ENCODE measurements at regions of chrX and their contacts with region 1.

Region 1: DNA sequence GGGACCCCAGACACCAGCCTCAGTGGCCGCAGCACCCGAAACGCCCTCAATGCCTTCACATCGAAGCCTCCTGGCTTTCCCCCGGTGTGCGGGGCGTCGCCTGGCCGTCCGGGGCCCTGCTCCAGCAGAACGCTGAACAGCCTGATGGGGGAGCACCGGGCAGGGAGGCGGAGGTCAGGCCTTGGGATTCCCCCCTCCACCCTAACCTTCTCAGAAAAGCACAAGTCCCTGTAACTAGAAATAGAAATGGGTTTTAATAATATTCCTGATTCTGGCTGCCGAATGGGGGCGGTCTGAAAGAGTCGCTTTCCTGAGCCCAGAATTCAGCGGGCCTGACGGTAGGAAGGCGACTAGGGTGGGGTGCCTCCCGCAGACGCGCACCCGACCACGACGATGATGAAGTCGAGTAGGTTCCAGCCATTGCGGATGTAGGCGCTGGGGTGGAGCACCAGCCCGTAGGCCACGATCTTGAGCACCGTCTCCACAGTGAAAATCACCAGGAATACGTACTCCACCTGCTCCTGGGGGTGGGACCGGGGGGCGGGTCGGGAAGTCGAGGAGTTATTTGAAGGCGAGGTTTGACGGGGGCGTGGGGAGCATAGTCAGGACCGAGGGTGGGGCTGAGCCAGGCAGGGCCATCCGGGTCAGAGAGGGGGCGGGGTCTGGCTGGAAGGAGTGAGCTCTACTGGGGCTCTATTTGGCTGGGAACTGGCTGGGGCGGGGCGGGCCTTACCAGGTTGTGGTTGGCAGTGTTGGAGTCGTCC is 2.5 kb downstream of the CACNA1F start:
- DNase-seq: peak; percentile 19 to 63 (median 44)
- ATAC-seq: peak; percentile 78
- H3K4me3 ChIP-seq: peak overlapping the region; percentile 28
- H3K4me3 Mint-ChIP-seq: peak overlapping the region; percentile 76 to 87 (median 80)
- H3K27ac ChIP-seq: peak overlapping the region; percentile 71
- H3K27ac Mint-ChIP-seq: peak overlapping the region; percentile 67 to 94 (median 88)
- H3K4me1 ChIP-seq: peaks cover 0 to 4% of the 10 kb centered on the region in 2 donors
- H3K4me1 Mint-ChIP-seq: peaks cover 6 to 26% (median 21%) of the 10 kb centered on the region in 7 donors
- H3K27me3 ChIP-seq: no peaks in the 10 kb centered on the region
- H3K27me3 Mint-ChIP-seq: no peaks in the 10 kb centered on the region

Region 2: DNA sequence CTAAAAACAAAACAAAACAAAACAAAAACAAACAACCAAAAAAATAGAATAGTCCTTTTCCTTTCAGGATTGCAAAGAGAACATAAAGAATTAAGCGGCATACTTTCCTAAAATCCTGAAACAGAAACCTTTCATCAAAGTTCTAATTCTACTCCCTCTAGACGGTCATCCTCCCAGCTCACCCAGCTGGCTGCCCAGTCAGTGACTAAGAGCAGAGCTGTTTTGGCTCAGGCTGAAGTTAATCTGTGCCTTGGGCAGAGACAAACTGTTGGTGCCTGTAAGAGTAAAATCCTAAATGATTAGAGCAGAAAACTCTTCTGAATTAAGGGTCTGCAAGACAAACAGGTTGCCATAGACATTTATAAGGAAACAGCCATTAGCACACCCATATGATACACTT is 564.7 kb before region 1 on chrX:
- CTCF ChIA-PET with region 1: no interaction called
- POLR2A ChIA-PET with region 1: no interaction called
- intact Hi-C with region 1: no loop called
- DNase-seq: no peak
- ATAC-seq: no peak
- H3K4me3 ChIP-seq: no peak overlapping the region
- H3K4me3 Mint-ChIP-seq: no peak overlapping the region
- H3K27ac ChIP-seq: no peak overlapping the region
- H3K27ac Mint-ChIP-seq: no peak overlapping the region
- H3K4me1 ChIP-seq: no peaks in the 10 kb centered on the region
- H3K4me1 Mint-ChIP-seq: peaks cover 4 to 6% (median 5%) of the 10 kb centered on the region in 7 donors
- H3K27me3 ChIP-seq: no peaks in the 10 kb centered on the region
- H3K27me3 Mint-ChIP-seq: no peaks in the 10 kb centered on the region

Region 3: DNA sequence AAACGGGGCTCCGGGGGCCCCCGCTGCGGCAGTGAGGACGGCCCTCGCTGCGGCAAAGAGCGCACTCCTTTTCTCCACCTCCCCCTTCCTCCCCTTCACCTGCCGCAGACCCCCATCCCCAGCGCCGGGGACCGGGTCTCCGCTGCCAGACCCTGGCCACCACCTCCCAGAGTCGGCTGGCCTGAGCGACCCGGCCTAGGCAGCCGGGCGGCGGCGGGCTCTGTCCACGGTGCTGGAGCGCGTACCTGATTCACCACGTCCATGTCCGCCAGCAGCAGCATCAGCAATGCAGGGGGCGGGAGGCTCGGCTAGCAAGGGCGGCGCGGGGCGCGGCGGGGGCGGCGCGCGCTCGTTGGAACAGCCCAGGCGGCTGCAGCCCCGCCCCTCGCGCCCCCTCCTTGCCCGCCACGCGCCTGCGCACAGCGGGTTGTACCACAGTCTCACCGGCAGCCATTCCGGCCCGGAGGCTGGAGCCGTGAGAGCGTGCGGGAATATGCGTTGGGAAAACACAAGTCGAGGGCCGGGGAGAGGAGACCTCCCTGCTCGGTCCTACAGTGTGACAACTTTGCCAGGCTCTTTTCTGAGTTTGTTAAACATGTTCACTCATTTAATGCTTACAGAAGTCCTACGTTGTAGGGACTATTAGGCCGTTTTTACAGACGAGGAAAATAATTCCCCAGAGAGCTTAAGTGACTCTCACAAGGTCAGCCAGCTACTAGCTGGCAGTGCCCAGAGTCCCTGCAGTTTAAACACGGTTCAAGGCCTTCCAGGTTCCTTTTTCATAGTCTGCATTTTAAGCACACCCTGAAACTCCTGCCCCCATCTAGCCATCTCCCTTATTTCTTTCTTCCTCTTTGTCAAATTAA is 30.5 kb before region 1 on chrX and contains the start of gene SYP:
- CTCF ChIA-PET with region 1: no interaction called
- POLR2A ChIA-PET with region 1: interaction called, 5 read pairs
- intact Hi-C with region 1: loop called (anchors 1 kb)
- DNase-seq: peak; percentile 82 to 89 (median 87)
- ATAC-seq: peak; percentile 100
- H3K4me3 ChIP-seq: peak within 1 kb of the TSS; percentile 50
- H3K4me3 Mint-ChIP-seq: peak within 1 kb of the TSS; percentile 65 to 79 (median 70)
- H3K27ac ChIP-seq: peak within 1 kb of the TSS; percentile 64
- H3K27ac Mint-ChIP-seq: peak within 1 kb of the TSS in 8 of 9 donors; percentile 23 to 84 (median 68)
- H3K4me1 ChIP-seq: no peaks in the 10 kb centered on the region
- H3K4me1 Mint-ChIP-seq: peaks cover 9 to 22% (median 12%) of the 10 kb centered on the region in 7 donors
- H3K27me3 ChIP-seq: no peaks in the 10 kb centered on the region
- H3K27me3 Mint-ChIP-seq: peaks cover 0 to 17% (median 0%) of the 10 kb centered on the region in 5 donors
- total RNA-seq, gene SYP: 0.35 to 2.2 (median 1.1) TPM